ENCODE measurements at regions of chr2 and their contacts with region 1.

Region 1: GRCh38 chr2:224284134-224284946 is 117.6 kb downstream of the FAM124B start:
- DNase-seq: no peak
- H3K4me3 ChIP-seq: no peak overlapping the region
- H3K27me3 ChIP-seq: no peaks in the 10 kb centered on the region
- CTCF ChIP-seq: peak; percentile 43

Region 2: GRCh38 chr2:223970343-223971128 is 313.8 kb before region 1 on chr2:
- CTCF ChIA-PET with region 1: interaction called, 216 read pairs
- POLR2A ChIA-PET with region 1: no interaction called
- DNase-seq: no peak
- H3K4me3 ChIP-seq: no peak overlapping the region
- H3K27me3 ChIP-seq: no peaks in the 10 kb centered on the region
- CTCF ChIP-seq: peak; percentile 82

Region 3: DNA sequence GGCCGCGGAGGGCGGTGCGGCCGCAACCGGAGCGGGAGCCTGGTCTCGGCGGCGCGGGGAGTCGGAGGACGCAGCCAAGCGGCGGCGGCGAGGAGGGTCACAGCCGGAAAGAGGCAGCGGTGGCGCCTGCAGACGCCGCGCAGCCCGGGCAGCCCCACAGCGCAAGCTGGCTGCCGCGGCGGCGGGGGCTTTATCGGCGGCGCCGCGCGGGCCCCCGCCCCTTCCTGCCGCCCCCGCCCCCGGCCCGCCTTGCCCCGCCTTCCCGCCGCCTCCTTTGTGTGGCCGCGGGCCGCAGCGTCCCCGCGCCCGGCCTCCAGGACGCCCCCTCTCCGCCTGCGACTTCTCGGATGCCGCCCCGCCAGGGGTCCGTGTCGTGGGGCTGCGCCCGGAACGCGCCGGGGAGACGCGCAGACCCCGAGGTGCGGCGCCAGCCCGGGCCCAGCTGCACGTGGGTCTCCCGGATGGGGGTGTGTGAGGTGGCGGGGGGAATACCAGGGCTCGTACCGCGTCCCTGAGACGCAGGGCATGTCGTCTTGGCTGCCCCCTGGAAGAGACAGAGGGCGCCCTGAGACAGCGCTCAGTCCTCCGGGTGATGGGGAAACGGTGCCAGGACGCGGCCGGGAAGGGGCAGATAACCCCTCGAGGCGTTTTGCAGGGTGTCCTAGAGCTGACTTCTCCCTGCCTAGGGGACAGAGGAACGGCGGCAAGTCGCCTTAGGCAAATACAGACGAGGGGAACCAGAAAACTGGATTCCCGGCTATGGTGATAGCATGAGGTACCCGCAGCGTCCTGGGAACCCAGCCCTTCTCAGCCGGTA is 245.0 kb before region 1 on chr2 and contains the start of gene SERPINE2:
- CTCF ChIA-PET with region 1: interaction called, 21 read pairs
- POLR2A ChIA-PET with region 1: no interaction called
- DNase-seq: no peak
- H3K4me3 ChIP-seq: peak within 1 kb of the TSS; percentile 72
- H3K27me3 ChIP-seq: no peaks in the 10 kb centered on the region
- CTCF ChIP-seq: peak; percentile 60
- polyA plus RNA-seq, gene SERPINE2: 387 and 750 TPM in 2 replicates

Region 4: DNA sequence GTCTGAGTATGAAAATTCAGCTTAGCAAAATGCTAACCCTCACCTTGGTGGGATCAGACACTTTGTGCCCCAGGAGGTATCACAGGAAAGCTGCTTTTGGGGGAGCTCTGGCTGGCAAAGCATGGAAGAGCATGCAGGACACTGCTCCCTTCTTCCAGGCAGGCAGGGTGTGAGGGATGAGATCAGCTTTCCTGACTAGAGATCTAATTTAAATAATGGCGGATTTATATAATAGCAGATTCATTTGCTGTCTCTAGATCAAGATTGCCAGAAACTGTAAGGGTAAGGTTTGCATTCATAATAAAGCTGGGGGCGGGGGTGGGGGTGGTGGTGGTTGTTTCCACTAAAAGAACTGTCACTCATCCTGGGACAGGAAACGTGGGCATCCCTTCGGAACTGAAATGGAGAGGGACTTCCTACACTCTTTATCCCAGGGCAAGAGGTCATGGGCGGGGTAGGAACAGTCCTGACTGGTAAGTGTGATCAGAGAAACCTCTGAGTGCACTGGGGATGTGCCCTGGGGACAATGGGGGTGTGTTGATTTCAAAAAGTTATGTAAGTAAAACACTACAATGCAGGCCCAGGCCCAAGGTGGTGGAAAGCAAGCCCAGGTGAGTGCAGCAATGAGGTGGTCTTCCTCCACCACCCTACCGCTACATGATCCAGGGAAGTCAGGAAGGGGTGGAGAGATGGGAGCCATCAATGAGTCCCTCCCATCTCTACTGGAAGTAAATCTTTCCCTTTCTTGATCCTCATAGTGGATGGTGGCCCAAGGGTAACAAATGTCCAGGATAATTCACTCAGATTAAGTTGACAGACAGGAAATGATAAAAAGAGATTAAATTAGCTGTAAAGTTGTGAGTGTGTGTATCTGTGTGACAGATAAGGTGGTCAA is 73.8 kb before region 1 on chr2:
- CTCF ChIA-PET with region 1: interaction called, 14 read pairs
- POLR2A ChIA-PET with region 1: no interaction called
- DNase-seq: no peak
- H3K4me3 ChIP-seq: no peak overlapping the region
- H3K27me3 ChIP-seq: no peaks in the 10 kb centered on the region
- CTCF ChIP-seq: no peak

Region 5: DNA sequence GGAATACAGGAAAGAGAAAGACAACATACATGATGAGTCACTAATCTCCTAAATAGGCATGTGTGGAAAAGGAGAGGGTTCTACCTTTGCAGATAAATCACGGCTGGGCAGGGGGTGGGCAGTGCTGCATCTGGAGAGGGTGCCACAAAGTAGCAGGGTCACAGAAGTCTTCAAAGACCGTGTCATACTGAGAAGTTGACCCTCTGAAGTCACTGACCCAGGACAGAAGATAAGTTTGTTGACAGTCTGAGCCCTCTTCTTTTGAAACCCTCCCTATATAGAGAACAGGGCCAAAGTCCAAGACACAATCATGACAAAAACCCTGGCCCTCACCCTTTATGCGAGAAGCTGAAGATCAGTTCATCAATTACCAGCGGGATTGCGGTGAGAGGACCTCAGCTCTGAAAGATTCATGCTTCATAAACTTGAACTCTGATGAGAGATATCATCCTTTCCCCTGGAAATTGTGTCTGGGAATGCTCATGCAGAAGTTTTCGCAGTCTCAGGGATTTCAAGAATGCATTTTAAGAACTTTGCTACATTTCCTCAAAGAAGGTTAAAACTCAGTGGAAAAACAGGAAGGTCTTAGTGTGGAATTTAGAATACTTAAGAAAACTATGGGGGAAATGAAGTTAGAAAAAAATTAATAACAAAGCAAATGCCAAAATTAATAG is 12.0 kb before region 1 on chr2:
- CTCF ChIA-PET with region 1: interaction called, 14 read pairs
- POLR2A ChIA-PET with region 1: no interaction called
- DNase-seq: no peak
- H3K4me3 ChIP-seq: no peak overlapping the region
- H3K27me3 ChIP-seq: no peaks in the 10 kb centered on the region
- CTCF ChIP-seq: no peak

Region 6: DNA sequence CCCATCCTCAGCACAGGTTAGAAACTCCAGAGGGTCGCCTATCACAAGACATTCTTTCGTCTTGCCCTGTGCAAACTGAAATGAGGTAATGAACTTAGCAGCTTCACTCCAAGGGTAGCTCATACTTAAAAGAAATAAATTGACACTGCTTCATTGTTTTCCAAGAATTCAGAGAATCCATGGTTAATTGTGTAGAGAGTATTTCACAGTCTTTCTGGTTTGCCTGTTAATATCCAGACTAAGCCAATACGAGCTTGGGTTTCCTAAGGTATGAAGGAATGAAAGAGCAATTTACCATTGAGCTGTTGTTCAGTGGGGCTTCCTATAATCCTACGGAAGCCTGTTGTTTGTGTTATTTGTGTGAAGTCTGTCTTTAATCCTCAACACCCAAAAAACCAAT is 58.9 kb after region 1 on chr2:
- CTCF ChIA-PET with region 1: no interaction called
- POLR2A ChIA-PET with region 1: no interaction called
- DNase-seq: no peak
- H3K4me3 ChIP-seq: no peak overlapping the region
- H3K27me3 ChIP-seq: no peaks in the 10 kb centered on the region
- CTCF ChIP-seq: no peak

Region 7: GRCh38 chr2:224401641-224402342 is 117.5 kb after region 1 on chr2 and contains the start of gene FAM124B:
- CTCF ChIA-PET with region 1: no interaction called
- POLR2A ChIA-PET with region 1: no interaction called
- DNase-seq: peak; percentile 40
- H3K4me3 ChIP-seq: no peak within 1 kb of the TSS
- H3K27me3 ChIP-seq: no peaks in the 10 kb centered on the region; the same call in 1 of the 2 replicates
- CTCF ChIP-seq: no peak
- polyA plus RNA-seq, gene FAM124B: 0.04 TPM in 1 of 2 replicates, not detected in the other